ENCODE measurements at regions of chr7 and their contacts with region 1.

Region 1: GRCh38 chr7:18495412-18496340 is at the start of gene HDAC9:
- DNase-seq: peak; percentile 77
- ATAC-seq: peak; percentile 90
- H3K4me3 ChIP-seq: peak within 1 kb of the TSS; percentile 52 to 87 (median 75)
- H3K4me3 Mint-ChIP-seq: peak within 1 kb of the TSS; percentile 80
- H3K27ac ChIP-seq: peak within 1 kb of the TSS; percentile 65 to 80
- H3K27ac Mint-ChIP-seq: peak within 1 kb of the TSS; percentile 82
- H3K4me1 ChIP-seq: peaks cover 25 to 50% of the 10 kb centered on the region in 2 donors
- H3K4me1 Mint-ChIP-seq: peaks cover 57% of the 10 kb centered on the region
- H3K27me3 ChIP-seq: no peaks in the 10 kb centered on the region
- H3K27me3 Mint-ChIP-seq: no peaks in the 10 kb centered on the region
- CTCF ChIP-seq: no peak
- total RNA-seq, gene HDAC9: 64.8 and 67.7 TPM in 2 replicates

Region 2: DNA sequence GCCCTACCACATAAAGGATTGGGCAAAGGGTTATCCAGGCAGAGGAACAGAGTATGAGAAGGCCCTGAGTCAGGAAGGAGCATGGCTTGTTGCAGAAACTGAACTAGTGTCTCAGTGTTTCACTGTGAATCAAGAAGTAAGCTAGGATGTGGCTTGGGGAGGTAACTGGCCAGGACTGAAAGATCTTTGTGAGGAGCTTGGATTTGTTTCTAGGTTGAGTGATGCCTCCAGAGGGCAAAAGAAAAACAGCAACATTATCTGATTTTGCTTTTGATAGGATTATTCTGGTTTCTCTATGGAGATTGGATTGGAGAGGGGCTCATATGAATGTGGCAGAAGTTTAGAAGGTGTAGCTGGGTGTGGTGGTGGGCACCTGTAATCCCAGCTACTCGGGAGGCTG is 138.0 kb before region 1 on chr7:
- CTCF ChIA-PET with region 1: interaction called, 10 read pairs
- POLR2A ChIA-PET with region 1: no interaction called
- intact Hi-C with region 1: loop called (anchors 2 kb)
- DNase-seq: no peak
- ATAC-seq: peak; percentile 31
- H3K4me3 ChIP-seq: no peak overlapping the region
- H3K4me3 Mint-ChIP-seq: no peak overlapping the region
- H3K27ac ChIP-seq: peak overlapping the region in 1 of 2 donors; percentile 6
- H3K27ac Mint-ChIP-seq: peak overlapping the region; percentile 64
- H3K4me1 ChIP-seq: peaks cover 8 to 9% of the 10 kb centered on the region in 2 donors
- H3K4me1 Mint-ChIP-seq: peaks cover 29% of the 10 kb centered on the region
- H3K27me3 ChIP-seq: no peaks in the 10 kb centered on the region
- H3K27me3 Mint-ChIP-seq: no peaks in the 10 kb centered on the region
- CTCF ChIP-seq: peak; percentile 36

Region 3: DNA sequence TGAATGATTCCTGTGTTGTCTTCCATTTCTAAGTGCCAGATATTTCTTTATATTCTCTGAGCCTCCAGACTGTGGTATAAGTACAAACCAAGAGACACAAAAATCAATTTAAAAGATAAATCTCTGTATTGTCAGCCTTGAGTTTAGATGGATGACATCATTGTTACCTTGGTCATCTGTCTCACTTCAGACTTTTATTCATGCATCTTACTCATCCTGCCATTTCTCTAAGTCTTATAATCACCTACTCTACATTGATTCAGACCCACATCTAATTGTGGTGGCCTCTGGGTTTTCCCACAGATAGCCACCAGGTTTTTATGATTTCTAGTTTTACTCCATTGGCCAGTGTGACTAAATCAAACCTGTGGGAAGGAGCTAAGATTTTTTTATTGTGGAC is 26.9 kb before region 1 on chr7:
- CTCF ChIA-PET with region 1: interaction called, 3 read pairs
- POLR2A ChIA-PET with region 1: no interaction called
- intact Hi-C with region 1: loop called (anchors 2 kb)
- DNase-seq: no peak
- ATAC-seq: no peak
- H3K4me3 ChIP-seq: no peak overlapping the region
- H3K4me3 Mint-ChIP-seq: no peak overlapping the region
- H3K27ac ChIP-seq: no peak overlapping the region
- H3K27ac Mint-ChIP-seq: no peak overlapping the region
- H3K4me1 ChIP-seq: peaks cover 3 to 5% of the 10 kb centered on the region in 2 donors
- H3K4me1 Mint-ChIP-seq: peaks cover 18% of the 10 kb centered on the region
- H3K27me3 ChIP-seq: no peaks in the 10 kb centered on the region
- H3K27me3 Mint-ChIP-seq: no peaks in the 10 kb centered on the region
- CTCF ChIP-seq: no peak

Region 4: DNA sequence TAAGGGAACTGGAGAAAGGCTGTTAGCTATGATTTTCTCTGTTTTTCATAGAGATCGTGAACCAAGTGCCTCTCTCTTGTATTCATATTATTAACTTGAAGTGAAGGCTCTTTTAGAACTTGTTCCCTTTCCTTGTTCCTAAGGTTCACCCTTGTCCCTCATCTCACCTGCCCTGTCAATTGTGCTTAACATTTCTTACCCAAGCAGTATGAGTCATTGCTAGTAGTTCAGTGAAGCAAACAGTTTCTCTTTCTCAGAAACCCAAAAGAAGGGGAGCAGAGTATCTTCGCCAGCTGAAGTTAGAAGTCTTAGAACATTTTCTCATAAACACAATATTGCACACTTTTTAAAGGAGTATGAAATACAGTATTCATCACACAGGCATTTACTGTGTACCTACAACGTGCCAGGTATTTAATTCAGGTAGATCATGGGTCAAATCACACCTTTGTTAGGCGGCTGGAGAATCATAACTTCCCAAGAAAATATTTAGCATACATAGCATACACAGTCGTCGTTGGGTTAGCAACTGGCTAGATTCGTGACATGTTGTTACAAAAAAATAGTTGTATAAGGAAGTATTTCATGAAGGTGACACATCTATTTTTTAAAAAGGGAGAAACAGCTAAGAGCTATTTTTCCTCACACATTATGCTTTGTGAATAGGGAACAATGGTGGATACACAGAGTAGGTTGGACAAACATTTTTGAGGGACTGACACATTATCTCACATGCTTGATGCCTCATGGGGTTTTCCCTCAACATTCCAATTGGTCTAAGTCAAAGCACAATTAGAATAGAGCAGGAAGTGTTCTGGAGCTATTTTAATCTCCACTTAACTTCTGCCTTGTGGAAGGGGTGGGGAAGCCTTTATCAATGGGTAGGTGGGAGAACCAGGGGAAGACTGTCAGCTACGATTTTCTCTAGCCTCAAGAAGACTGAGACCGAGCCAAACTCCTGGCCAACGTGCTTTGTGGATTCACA is 13.1 kb after region 1 on chr7:
- CTCF ChIA-PET with region 1: interaction called, 39 read pairs
- POLR2A ChIA-PET with region 1: interaction called, 8 read pairs
- intact Hi-C with region 1: loop called (anchors 1 kb)
- DNase-seq: peak; percentile 75
- ATAC-seq: peak; percentile 79
- H3K4me3 ChIP-seq: peak overlapping the region in 4 of 5 experiments; percentile 13 to 65 (median 30)
- H3K4me3 Mint-ChIP-seq: peak overlapping the region; percentile 93
- H3K27ac ChIP-seq: peak overlapping the region; percentile 91 to 96
- H3K27ac Mint-ChIP-seq: peak overlapping the region; percentile 99
- H3K4me1 ChIP-seq: peaks cover 54 to 76% of the 10 kb centered on the region in 2 donors
- H3K4me1 Mint-ChIP-seq: peaks cover 77% of the 10 kb centered on the region
- H3K27me3 ChIP-seq: no peaks in the 10 kb centered on the region
- H3K27me3 Mint-ChIP-seq: no peaks in the 10 kb centered on the region
- CTCF ChIP-seq: no peak

Region 5: GRCh38 chr7:18520450-18521235 is 25.0 kb after region 1 on chr7:
- CTCF ChIA-PET with region 1: interaction called, 8 read pairs
- POLR2A ChIA-PET with region 1: interaction called, 9 read pairs
- intact Hi-C with region 1: loop called (anchors 1 kb)
- DNase-seq: peak; percentile 74
- ATAC-seq: peak; percentile 80
- H3K4me3 ChIP-seq: peak overlapping the region in 4 of 5 experiments; percentile 8 to 66 (median 33)
- H3K4me3 Mint-ChIP-seq: peak overlapping the region; percentile 84
- H3K27ac ChIP-seq: peak overlapping the region; percentile 77 to 90
- H3K27ac Mint-ChIP-seq: peak overlapping the region; percentile 97
- H3K4me1 ChIP-seq: peaks cover 27 to 45% of the 10 kb centered on the region in 2 donors
- H3K4me1 Mint-ChIP-seq: peaks cover 74% of the 10 kb centered on the region
- H3K27me3 ChIP-seq: no peaks in the 10 kb centered on the region
- H3K27me3 Mint-ChIP-seq: no peaks in the 10 kb centered on the region
- CTCF ChIP-seq: no peak

Region 6: DNA sequence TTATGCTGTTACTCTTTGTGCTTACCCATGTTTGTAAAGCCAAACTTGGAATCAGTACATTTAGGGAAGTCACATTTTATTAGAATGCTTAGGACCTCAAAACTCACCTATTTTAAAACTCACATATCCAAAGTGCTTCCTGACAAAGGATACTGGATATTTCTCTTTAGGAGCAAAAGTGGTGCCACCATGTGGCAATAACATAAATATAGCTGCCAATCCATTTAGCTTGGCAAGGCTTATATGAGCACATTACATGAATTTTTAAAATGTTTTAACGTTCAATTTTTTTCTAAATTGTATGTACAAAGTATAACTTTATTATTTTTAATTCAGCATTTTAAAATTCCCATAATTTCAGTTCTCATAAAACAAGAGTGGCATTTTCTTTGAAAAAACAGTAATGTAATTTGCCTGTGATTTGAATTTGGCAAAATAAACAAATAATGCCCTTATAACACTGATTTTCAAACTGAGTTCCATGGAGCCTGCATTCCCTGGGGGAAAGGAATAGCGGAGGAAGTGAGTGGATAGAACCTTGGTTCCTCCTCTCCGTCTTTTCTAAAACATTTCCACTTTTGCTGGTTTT is 75.3 kb after region 1 on chr7:
- CTCF ChIA-PET with region 1: interaction called, 58 read pairs
- POLR2A ChIA-PET with region 1: no interaction called
- intact Hi-C with region 1: loop called (anchors 1 kb)
- DNase-seq: no peak
- ATAC-seq: no peak
- H3K4me3 ChIP-seq: no peak overlapping the region
- H3K4me3 Mint-ChIP-seq: no peak overlapping the region
- H3K27ac ChIP-seq: peak overlapping the region in 1 of 2 donors; percentile 44
- H3K27ac Mint-ChIP-seq: peak overlapping the region; percentile 20
- H3K4me1 ChIP-seq: peaks cover 45 to 56% of the 10 kb centered on the region in 2 donors
- H3K4me1 Mint-ChIP-seq: peaks cover 62% of the 10 kb centered on the region
- H3K27me3 ChIP-seq: no peaks in the 10 kb centered on the region
- H3K27me3 Mint-ChIP-seq: no peaks in the 10 kb centered on the region
- CTCF ChIP-seq: no peak

Region 7: DNA sequence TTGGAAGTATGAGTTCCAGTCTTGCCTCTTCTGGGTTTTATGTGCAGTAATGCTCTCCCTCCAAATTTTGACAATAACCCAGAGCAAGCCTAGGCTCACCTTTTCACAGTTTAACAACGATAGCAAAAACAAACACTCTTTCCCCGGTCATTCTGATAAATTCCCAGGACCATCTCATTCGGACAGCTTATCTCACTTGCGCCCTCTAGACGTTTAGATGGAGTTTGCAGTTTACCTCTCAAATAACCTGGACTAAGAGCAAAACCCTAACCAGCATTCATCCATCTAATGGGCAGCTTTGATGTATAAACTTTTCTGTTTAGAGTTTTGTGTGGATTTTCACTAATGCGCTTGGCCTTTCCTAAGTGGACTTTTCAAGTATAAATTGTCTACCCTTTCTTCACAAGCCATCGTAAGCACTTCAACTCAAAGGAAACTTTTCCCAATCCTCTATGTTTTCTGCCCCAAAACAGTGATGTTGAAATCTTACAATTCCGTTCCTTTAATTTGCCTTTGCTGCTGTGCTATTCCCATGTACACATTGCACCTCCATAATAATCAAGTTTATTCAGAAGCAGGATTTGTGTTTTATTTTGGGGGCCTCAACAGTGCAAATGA is 114.8 kb after region 1 on chr7:
- CTCF ChIA-PET with region 1: interaction called, 24 read pairs
- POLR2A ChIA-PET with region 1: no interaction called
- intact Hi-C with region 1: no loop called
- DNase-seq: peak; percentile 44
- ATAC-seq: peak; percentile 31
- H3K4me3 ChIP-seq: no peak overlapping the region
- H3K4me3 Mint-ChIP-seq: no peak overlapping the region
- H3K27ac ChIP-seq: no peak overlapping the region
- H3K27ac Mint-ChIP-seq: peak overlapping the region; percentile 32
- H3K4me1 ChIP-seq: no peaks in the 10 kb centered on the region
- H3K4me1 Mint-ChIP-seq: peaks cover 7% of the 10 kb centered on the region
- H3K27me3 ChIP-seq: no peaks in the 10 kb centered on the region
- H3K27me3 Mint-ChIP-seq: no peaks in the 10 kb centered on the region
- CTCF ChIP-seq: peak; percentile 74

Region 8: GRCh38 chr7:18626717-18627116 is 131.0 kb after region 1 on chr7:
- CTCF ChIA-PET with region 1: no interaction called
- POLR2A ChIA-PET with region 1: no interaction called
- intact Hi-C with region 1: no loop called
- DNase-seq: no peak
- ATAC-seq: no peak
- H3K4me3 ChIP-seq: no peak overlapping the region
- H3K4me3 Mint-ChIP-seq: no peak overlapping the region
- H3K27ac ChIP-seq: no peak overlapping the region
- H3K27ac Mint-ChIP-seq: peak overlapping the region; percentile 1
- H3K4me1 ChIP-seq: no peaks in the 10 kb centered on the region
- H3K4me1 Mint-ChIP-seq: no peaks in the 10 kb centered on the region
- H3K27me3 ChIP-seq: no peaks in the 10 kb centered on the region
- H3K27me3 Mint-ChIP-seq: no peaks in the 10 kb centered on the region
- CTCF ChIP-seq: no peak

Region 9: GRCh38 chr7:19560111-19560883 is 1064.6 kb after region 1 on chr7:
- CTCF ChIA-PET with region 1: no interaction called
- POLR2A ChIA-PET with region 1: no interaction called
- intact Hi-C with region 1: no loop called
- DNase-seq: no peak
- ATAC-seq: no peak
- H3K4me3 ChIP-seq: no peak overlapping the region
- H3K4me3 Mint-ChIP-seq: no peak overlapping the region
- H3K27ac ChIP-seq: no peak overlapping the region
- H3K27ac Mint-ChIP-seq: no peak overlapping the region
- H3K4me1 ChIP-seq: no peaks in the 10 kb centered on the region
- H3K4me1 Mint-ChIP-seq: no peaks in the 10 kb centered on the region
- H3K27me3 ChIP-seq: no peaks in the 10 kb centered on the region
- H3K27me3 Mint-ChIP-seq: no peaks in the 10 kb centered on the region
- CTCF ChIP-seq: no peak